ENCODE measurements at regions of chr18 and their contacts with region 1.

Region 1: GRCh38 chr18:35174093-35174731 is 66.6 kb upstream of the ZNF397 start:
- DNase-seq: peak; percentile 78
- ATAC-seq: peak; percentile 98
- H3K4me3 ChIP-seq: no peak overlapping the region
- H3K4me3 Mint-ChIP-seq: peak overlapping the region; percentile 59
- H3K27ac ChIP-seq: peak overlapping the region; percentile 37 to 69
- H3K27ac Mint-ChIP-seq: peak overlapping the region; percentile 77
- H3K4me1 ChIP-seq: peaks cover 14 to 23% of the 10 kb centered on the region in 2 donors
- H3K4me1 Mint-ChIP-seq: peaks cover 23% of the 10 kb centered on the region
- H3K27me3 ChIP-seq: no peaks in the 10 kb centered on the region
- H3K27me3 Mint-ChIP-seq: no peaks in the 10 kb centered on the region
- CTCF ChIP-seq: no peak

Region 2: GRCh38 chr18:35158728-35159450 is 15.3 kb before region 1 on chr18:
- CTCF ChIA-PET with region 1: interaction called, 7 read pairs
- POLR2A ChIA-PET with region 1: no interaction called
- intact Hi-C with region 1: loop called (anchors 2 kb)
- DNase-seq: peak; percentile 74
- ATAC-seq: peak; percentile 94
- H3K4me3 ChIP-seq: peak overlapping the region in 2 of 5 experiments; percentile 10 to 21
- H3K4me3 Mint-ChIP-seq: peak overlapping the region; percentile 76
- H3K27ac ChIP-seq: peak overlapping the region; percentile 74 to 75
- H3K27ac Mint-ChIP-seq: peak overlapping the region; percentile 95
- H3K4me1 ChIP-seq: peaks cover 30 to 32% of the 10 kb centered on the region in 2 donors
- H3K4me1 Mint-ChIP-seq: peaks cover 30% of the 10 kb centered on the region
- H3K27me3 ChIP-seq: no peaks in the 10 kb centered on the region
- H3K27me3 Mint-ChIP-seq: no peaks in the 10 kb centered on the region
- CTCF ChIP-seq: no peak